ENCODE measurements at regions of chr1 and their contacts with region 1.

Region 1: DNA sequence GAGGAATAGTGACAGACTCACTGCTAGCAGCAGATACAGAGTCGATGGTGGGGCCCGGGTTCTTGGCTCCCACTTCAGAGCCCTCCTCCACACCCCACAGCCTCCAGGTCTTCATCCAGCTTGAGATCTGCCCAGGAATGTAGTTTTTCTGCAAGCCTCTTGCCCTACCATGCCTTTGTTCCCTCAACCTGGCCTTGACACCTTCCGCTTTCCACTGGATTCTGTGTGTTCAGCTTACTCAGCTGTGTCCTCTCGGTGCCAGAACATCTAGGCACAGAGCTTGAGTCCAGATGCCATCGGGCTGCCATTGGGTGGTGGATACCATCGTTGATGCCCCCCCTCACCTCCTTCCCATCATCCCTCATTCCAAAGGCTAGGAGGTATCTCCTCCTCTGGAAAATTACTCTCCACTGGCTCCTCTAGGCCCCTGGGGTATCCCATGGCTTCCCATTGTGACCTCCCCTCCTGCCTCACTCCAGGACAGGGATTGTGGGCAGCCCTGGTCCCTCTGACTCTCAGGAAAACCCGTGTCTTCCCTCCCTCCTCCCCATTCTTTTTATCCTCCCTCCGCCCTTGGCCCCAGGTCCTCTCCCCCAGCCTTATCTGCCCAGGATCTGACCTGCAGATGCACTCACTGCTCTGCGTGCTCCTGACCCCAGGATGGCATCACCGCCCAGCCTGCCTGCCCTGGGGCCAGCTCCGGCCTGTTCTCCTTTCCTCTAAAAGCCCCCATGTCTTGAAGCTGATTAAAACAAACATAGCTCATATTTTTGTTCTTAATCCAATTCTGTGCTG is 14.2 kb upstream of the UBL4B start:
- DNase-seq: peak; percentile 86 to 97
- H3K4me3 ChIP-seq: peak overlapping the region; percentile 3; the same call in 1 of the 2 replicates
- H3K27ac ChIP-seq: peak overlapping the region; percentile 99
- H3K4me1 ChIP-seq: peaks cover 89% of the 10 kb centered on the region
- H3K27me3 ChIP-seq: no peaks in the 10 kb centered on the region
- CTCF ChIP-seq: no peak

Region 2: GRCh38 chr1:110087812-110088738 is 10.0 kb before region 1 on chr1:
- CTCF ChIA-PET with region 1: interaction called, 28 read pairs
- POLR2A ChIA-PET with region 1: interaction called, 4 read pairs
- intact Hi-C with region 1: loop called (anchors 1 kb)
- DNase-seq: peak; percentile 47 to 60
- H3K4me3 ChIP-seq: no peak overlapping the region
- H3K27ac ChIP-seq: peak overlapping the region; percentile 65
- H3K4me1 ChIP-seq: peaks cover 76% of the 10 kb centered on the region
- H3K27me3 ChIP-seq: no peaks in the 10 kb centered on the region
- CTCF ChIP-seq: peak; percentile 95

Region 3: DNA sequence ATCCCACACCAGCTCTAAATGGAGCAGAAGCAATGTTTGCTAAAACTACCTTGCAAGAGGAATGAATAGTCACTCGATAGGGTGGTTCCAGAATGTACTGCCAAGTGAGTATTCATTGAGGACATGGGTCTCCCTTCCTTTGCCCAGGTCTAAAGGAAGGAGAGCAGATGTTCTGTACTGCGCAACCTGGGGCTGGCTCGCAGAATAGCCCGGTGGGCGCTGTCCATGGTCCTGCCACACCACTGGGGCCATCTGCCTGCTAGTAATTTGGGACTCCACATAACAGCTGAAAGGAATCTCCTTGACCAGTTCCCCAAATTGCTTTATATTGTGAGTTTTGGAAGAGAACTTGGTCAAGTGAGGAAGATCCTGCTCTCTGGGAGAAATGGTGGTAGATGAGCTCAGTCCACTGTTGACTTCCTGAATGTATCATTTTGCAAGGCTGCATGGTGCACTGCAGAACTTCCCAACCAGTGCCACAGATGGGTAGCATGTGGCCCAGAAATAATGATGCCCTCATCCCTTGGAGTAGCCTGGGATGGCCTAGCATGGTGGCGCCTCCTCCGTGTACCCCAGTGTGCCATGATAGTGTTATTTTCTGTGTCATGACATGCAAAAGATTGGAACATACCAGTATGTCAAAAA is 57.9 kb after region 1 on chr1:
- CTCF ChIA-PET with region 1: no interaction called
- POLR2A ChIA-PET with region 1: no interaction called
- intact Hi-C with region 1: no loop called
- DNase-seq: peak in 1 of 2 experiments; percentile 38
- H3K4me3 ChIP-seq: no peak overlapping the region
- H3K27ac ChIP-seq: no peak overlapping the region
- H3K4me1 ChIP-seq: peaks cover 9% of the 10 kb centered on the region
- H3K27me3 ChIP-seq: peaks cover 4% of the 10 kb centered on the region; the same call in 1 of the 2 replicates
- CTCF ChIP-seq: no peak

Measured in PC-9 (cell line).